MCF 10A (cell line): ENCODE measurements at regions of chr11 and their contacts with region 1.

Region 1: DNA sequence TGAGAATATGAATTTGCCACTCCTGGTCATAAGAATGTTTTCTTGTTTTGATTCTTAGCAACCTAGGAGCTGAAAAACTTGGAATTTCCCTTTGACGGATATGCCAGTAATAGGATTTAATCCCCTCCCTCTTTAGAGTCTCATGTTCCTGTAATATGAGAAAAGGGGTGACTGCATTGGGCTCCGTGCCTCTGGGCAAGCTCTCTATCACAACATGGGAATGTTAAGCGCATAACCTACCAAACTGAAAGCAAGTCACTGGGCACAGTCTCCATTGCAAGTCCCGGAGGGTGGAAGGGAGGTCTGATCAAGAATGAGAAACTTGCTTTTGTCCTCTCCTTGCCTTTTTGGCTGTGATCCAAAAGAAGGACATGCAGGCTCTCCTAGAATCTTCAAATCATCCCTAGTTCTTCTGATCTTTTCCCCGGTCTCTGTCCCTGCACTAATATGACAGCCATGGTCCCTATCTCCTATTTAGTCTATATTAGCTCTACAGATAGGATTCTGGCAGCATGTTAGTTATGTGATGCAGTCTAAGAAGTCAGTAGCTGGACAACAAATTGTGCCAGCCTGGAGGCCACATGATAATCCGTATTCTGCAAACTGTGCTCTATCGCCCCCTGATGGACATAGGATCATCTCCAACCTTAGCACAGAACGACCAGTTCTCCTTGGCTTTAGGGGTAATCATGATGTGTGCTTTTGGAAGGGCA is 11.7 kb downstream of the OR10D3 start:
- DNase-seq: peak; percentile 87
- H3K4me3 Mint-ChIP-seq: no peak overlapping the region
- H3K27ac Mint-ChIP-seq: no peak overlapping the region
- H3K4me1 Mint-ChIP-seq: peaks cover 4% of the 10 kb centered on the region
- H3K27me3 Mint-ChIP-seq: peaks cover 28% of the 10 kb centered on the region
- CTCF ChIP-seq: peak; percentile 78

Region 2: GRCh38 chr11:123741159-123742028 is 453.5 kb before region 1 on chr11 and contains the start of gene ZNF202:
- CTCF ChIA-PET with region 1: no interaction called
- POLR2A ChIA-PET with region 1: no interaction called
- intact Hi-C with region 1: loop called (anchors 10 kb)
- DNase-seq: peak; percentile 91
- H3K4me3 Mint-ChIP-seq: peak within 1 kb of the TSS; percentile 89
- H3K27ac Mint-ChIP-seq: peak within 1 kb of the TSS; percentile 87
- H3K4me1 Mint-ChIP-seq: peaks cover 13% of the 10 kb centered on the region
- H3K27me3 Mint-ChIP-seq: no peaks in the 10 kb centered on the region
- CTCF ChIP-seq: no peak
- total RNA-seq, gene ZNF202: 15.6 and 22.1 TPM in 2 replicates

Region 3: GRCh38 chr11:124108156-124108555 is 86.7 kb before region 1 on chr11:
- CTCF ChIA-PET with region 1: interaction called, 3 read pairs
- POLR2A ChIA-PET with region 1: no interaction called
- intact Hi-C with region 1: loop called (anchors 1 kb)
- DNase-seq: peak; percentile 56
- H3K4me3 Mint-ChIP-seq: no peak overlapping the region
- H3K27ac Mint-ChIP-seq: no peak overlapping the region
- H3K4me1 Mint-ChIP-seq: no peaks in the 10 kb centered on the region
- H3K27me3 Mint-ChIP-seq: peaks cover 28% of the 10 kb centered on the region
- CTCF ChIP-seq: peak; percentile 20